Transverse colon (tissue), 4 donors: ENCODE measurements at regions of chr6 and their contacts with region 1.

Region 1: GRCh38 chr6:107894821-107895396 is 63.1 kb downstream of the SEC63 start:
- DNase-seq: peak; percentile 67
- H3K4me3 ChIP-seq: no peak overlapping the region
- H3K27ac ChIP-seq: peak overlapping the region; percentile 57 to 82 (median 76)
- H3K4me1 ChIP-seq: peaks cover 0 to 15% (median 6%) of the 10 kb centered on the region in 4 donors
- H3K27me3 ChIP-seq: no peaks in the 10 kb centered on the region
- CTCF ChIP-seq: no peak
- EP300 ChIP-seq: no peak
- POLR2A ChIP-seq: no peak

Region 2: DNA sequence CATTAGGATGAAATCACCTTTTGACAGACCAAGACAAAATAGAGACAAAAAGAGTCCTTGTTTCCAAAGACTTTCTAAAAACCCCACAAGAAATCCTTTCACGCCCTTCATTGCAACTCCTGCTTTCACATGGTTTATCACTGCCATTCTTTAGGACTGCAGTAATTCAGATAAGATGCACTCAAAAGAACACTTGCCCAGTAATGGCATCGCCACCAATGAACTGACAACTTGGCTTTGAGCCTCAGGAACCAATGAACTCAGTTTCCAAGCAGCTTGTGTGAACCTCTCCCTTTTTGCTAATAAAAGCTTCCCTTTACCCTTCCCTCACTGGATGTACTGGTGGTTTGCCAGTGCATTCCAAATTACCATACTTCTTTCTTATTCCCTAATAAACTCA is 157.8 kb after region 1 on chr6:
- in situ Hi-C with region 1: no loop called
- intact Hi-C with region 1: loop called (anchors 5 kb)
- DNase-seq: no peak
- H3K4me3 ChIP-seq: no peak overlapping the region
- H3K27ac ChIP-seq: no peak overlapping the region
- H3K4me1 ChIP-seq: no peaks in the 10 kb centered on the region
- H3K27me3 ChIP-seq: no peaks in the 10 kb centered on the region
- CTCF ChIP-seq: no peak
- EP300 ChIP-seq: no peak
- POLR2A ChIP-seq: no peak